Activated T-helper 1 cell treated with anti-CD3 and anti-CD28 coated beads, Interleukin-12 subunit alpha, Interleukin-12 subunit beta, Interleukin-2, Interleukin-4 antibody, amounts not matched to agents 30 ng/mL and 10 ng/mL and 1 ng/mL, durations not matched to agents 14 hours and 24 hours and 36 hours (primary cell): ENCODE measurements at regions of chr6 and their contacts with region 1.

Region 1: GRCh38 chr6:70413114-70413991 is at the start of gene FAM135A:
- DNase-seq: peak; percentile 91
- H3K4me3 Mint-ChIP-seq: peak within 1 kb of the TSS; percentile 98
- H3K27ac Mint-ChIP-seq: peak within 1 kb of the TSS; percentile 92
- H3K4me1 Mint-ChIP-seq: peaks cover 25% of the 10 kb centered on the region
- H3K27me3 Mint-ChIP-seq: peaks cover 7% of the 10 kb centered on the region
- total RNA-seq, gene FAM135A: 9.9 and 11.8 TPM in 2 replicates

Region 2: GRCh38 chr6:69796642-69797390 is 616.5 kb before region 1 on chr6 and contains the start of gene LMBRD1:
- intact Hi-C with region 1: loop called (anchors 2 kb)
- DNase-seq: peak; percentile 97
- H3K4me3 Mint-ChIP-seq: peak within 1 kb of the TSS; percentile 93
- H3K27ac Mint-ChIP-seq: peak within 1 kb of the TSS; percentile 92
- H3K4me1 Mint-ChIP-seq: peaks cover 28% of the 10 kb centered on the region
- H3K27me3 Mint-ChIP-seq: peaks cover 3% of the 10 kb centered on the region
- total RNA-seq, gene LMBRD1: 16.6 TPM in 2 replicates

Region 3: GRCh38 chr6:70566751-70567382 is 153.5 kb after region 1 on chr6 and contains the start of gene SDHAF4:
- intact Hi-C with region 1: loop called (anchors 1 kb)
- DNase-seq: peak; percentile 92
- H3K4me3 Mint-ChIP-seq: peak within 1 kb of the TSS; percentile 88
- H3K27ac Mint-ChIP-seq: peak within 1 kb of the TSS; percentile 81
- H3K4me1 Mint-ChIP-seq: peaks cover 31% of the 10 kb centered on the region
- H3K27me3 Mint-ChIP-seq: no peaks in the 10 kb centered on the region
- total RNA-seq, gene SDHAF4: 10.6 and 11.8 TPM in 2 replicates

Region 4: DNA sequence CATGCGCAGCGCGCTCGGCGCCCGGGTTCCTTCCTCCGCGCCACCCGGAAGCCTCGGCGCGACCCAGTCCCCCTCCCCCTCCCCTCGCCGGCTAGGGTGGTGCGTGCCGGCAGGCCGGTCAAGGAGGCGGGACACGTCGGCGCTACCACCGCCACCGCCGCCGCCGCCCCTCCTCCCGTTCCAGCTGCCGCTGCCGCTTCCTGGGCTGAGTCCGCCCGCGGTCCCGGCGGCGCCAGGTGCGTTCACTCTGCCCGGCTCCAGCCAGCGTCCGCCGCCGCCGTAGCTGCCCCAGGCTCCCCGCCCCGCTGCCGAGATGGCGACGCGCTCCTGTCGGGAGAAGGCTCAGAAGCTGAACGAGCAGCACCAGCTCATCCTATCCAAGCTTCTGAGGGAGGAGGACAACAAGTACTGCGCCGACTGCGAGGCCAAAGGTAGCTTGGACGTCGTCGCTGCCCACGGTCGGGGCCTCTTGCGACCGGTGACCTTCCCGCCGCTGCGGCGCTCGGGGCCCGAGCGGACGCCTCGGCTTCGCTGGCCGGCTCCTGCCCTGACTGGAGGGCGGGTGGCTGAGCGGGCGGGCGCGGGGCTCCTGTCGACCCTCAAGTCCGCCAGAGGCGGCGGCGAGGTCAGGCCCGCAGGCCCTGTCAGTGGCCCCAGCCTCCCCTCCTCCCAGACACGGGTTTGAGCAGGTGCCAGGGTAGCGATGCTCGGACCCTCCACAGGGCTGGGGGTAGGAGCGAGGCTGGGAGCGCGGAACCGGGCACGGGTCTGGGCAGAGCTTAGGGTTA is 254.6 kb after region 1 on chr6 and contains the start of gene SMAP1:
- intact Hi-C with region 1: loop called (anchors 1 kb)
- DNase-seq: peak; percentile 91
- H3K4me3 Mint-ChIP-seq: peak within 1 kb of the TSS; percentile 90
- H3K27ac Mint-ChIP-seq: peak within 1 kb of the TSS; percentile 92
- H3K4me1 Mint-ChIP-seq: peaks cover 59% of the 10 kb centered on the region
- H3K27me3 Mint-ChIP-seq: no peaks in the 10 kb centered on the region
- total RNA-seq, gene SMAP1: 24.3 and 26.3 TPM in 2 replicates

Region 5: DNA sequence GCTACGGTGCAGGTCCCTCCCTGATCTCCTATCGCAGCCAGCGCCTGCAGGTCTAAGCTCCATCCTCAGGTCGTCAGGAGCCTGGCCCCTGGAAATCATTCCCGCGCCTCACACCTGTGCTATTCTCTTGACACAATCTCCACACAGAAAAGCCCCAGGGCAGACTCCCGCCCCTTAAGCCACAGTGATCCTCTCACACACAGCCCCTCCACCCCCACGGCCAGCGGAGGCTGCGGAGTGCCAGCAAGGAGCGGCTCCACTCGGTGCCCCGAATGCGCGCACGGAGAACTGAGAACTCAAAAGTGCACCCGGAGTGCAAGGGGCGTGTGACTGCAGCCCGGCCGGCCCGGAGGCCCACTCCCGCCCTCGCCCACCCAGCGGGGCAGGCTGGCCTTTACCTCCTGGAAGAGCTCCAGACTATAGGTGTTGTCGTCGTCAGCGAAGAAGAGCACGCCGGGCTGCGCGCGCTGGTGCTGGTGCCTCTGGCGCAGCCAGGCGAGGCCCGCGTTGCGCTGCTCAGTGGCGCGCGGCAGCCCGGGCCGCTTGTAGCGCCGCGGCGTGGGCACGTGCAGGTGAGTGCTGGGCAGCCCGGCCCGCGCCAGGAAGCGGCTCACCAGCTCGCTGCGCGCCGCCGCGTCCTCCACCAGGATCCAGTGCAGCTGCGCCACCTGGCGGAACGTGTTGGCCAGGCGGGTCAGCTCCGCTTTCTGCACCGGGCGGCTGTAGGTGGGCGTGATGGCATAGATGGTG is 542.3 kb after region 1 on chr6:
- intact Hi-C with region 1: loop called (anchors 1 kb)
- DNase-seq: peak; percentile 71
- H3K4me3 Mint-ChIP-seq: peak overlapping the region; percentile 78
- H3K27ac Mint-ChIP-seq: no peak overlapping the region
- H3K4me1 Mint-ChIP-seq: peaks cover 5% of the 10 kb centered on the region
- H3K27me3 Mint-ChIP-seq: peaks cover 67% of the 10 kb centered on the region